ENCODE measurements at regions of chr4 and their contacts with region 1.

Region 1: GRCh38 chr4:40736910-40737309 is 12.8 kb upstream of the NSUN7 start:
- DNase-seq: no peak
- H3K4me3 Mint-ChIP-seq: no peak overlapping the region
- H3K27ac Mint-ChIP-seq: no peak overlapping the region
- H3K4me1 Mint-ChIP-seq: peaks cover 19% of the 10 kb centered on the region
- H3K27me3 Mint-ChIP-seq: peaks cover 14% of the 10 kb centered on the region

Region 2: DNA sequence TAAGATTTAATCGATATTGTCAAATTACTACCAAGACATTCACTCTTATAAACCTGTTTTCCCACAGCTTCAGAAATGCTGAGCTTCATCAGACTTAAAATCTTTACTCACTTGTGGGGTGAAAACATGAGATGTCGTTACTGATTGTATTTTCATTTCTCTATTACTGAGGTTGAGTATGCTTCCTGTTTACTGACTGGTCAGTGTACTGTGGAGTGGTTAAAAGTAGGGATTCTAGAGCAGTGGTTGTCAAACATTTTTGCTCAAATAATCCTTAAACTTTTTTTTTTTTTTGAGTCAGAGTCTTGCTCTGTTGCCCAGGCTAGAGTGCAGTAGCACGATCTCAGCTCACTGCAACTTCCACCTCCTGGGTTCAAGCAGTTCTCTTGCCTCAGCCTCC is 63.2 kb after region 1 on chr4:
- intact Hi-C with region 1: no loop called
- DNase-seq: no peak
- H3K4me3 Mint-ChIP-seq: no peak overlapping the region
- H3K27ac Mint-ChIP-seq: no peak overlapping the region
- H3K4me1 Mint-ChIP-seq: no peaks in the 10 kb centered on the region
- H3K27me3 Mint-ChIP-seq: peaks cover 7% of the 10 kb centered on the region

Region 3: GRCh38 chr4:40897557-40898203 is 160.8 kb after region 1 on chr4:
- intact Hi-C with region 1: loop called (anchors 5 kb)
- DNase-seq: peak; percentile 37
- H3K4me3 Mint-ChIP-seq: peak overlapping the region; percentile 68
- H3K27ac Mint-ChIP-seq: no peak overlapping the region
- H3K4me1 Mint-ChIP-seq: peaks cover 4% of the 10 kb centered on the region
- H3K27me3 Mint-ChIP-seq: no peaks in the 10 kb centered on the region

Region 4: GRCh38 chr4:40916880-40917279 is 180.0 kb after region 1 on chr4:
- intact Hi-C with region 1: loop called (anchors 5 kb)
- DNase-seq: peak; percentile 23
- H3K4me3 Mint-ChIP-seq: no peak overlapping the region
- H3K27ac Mint-ChIP-seq: no peak overlapping the region
- H3K4me1 Mint-ChIP-seq: peaks cover 32% of the 10 kb centered on the region
- H3K27me3 Mint-ChIP-seq: no peaks in the 10 kb centered on the region